Activated naive CD4-positive, alpha-beta T cell treated with anti-CD3 and anti-CD28 coated beads for 36 hours (primary cell): ENCODE measurements at regions of chr12 and their contacts with region 1.

Region 1: GRCh38 chr12:47837190-47838171 is 17.8 kb upstream of the HDAC7 start:
- DNase-seq: peak; percentile 77
- H3K4me3 Mint-ChIP-seq: no peak overlapping the region
- H3K27ac Mint-ChIP-seq: peak overlapping the region; percentile 69
- H3K4me1 Mint-ChIP-seq: peaks cover 61% of the 10 kb centered on the region
- H3K27me3 Mint-ChIP-seq: no peaks in the 10 kb centered on the region

Region 2: DNA sequence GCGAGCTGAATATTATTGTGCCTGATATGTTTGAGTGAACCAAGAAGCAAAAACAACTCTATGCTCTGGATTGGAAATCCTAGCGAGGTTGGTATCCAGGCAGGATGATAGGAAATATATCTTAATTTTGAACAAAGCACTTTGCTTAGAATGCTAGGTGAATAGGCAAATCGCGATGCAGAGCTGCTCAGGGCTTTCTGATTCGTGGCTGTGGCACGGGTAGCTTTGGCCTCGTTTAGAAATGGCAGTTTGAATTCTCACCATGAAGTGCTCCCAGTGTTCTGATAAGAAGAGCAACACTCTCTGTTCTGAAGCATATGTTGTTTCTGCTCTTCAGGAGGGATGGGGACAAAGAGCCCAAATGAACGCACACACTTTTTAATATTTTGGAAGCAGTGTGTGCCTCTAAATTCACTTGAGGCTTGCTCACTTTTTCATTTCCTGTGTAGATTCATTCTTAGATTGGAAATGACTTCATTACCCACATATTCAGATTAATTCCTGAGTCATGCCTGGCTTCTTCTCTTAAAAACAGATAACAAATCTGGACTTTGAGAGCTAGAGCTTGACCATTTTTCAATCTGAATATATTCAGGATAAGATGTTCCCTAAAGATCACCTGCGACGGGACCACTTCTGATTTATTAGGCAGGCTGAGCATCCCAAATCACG is 332.6 kb before region 1 on chr12:
- CTCF ChIA-PET with region 1: no interaction called
- intact Hi-C with region 1: no loop called
- DNase-seq: no peak
- H3K4me3 Mint-ChIP-seq: no peak overlapping the region
- H3K27ac Mint-ChIP-seq: peak overlapping the region; percentile 21
- H3K4me1 Mint-ChIP-seq: peaks cover 20% of the 10 kb centered on the region
- H3K27me3 Mint-ChIP-seq: no peaks in the 10 kb centered on the region

Region 3: DNA sequence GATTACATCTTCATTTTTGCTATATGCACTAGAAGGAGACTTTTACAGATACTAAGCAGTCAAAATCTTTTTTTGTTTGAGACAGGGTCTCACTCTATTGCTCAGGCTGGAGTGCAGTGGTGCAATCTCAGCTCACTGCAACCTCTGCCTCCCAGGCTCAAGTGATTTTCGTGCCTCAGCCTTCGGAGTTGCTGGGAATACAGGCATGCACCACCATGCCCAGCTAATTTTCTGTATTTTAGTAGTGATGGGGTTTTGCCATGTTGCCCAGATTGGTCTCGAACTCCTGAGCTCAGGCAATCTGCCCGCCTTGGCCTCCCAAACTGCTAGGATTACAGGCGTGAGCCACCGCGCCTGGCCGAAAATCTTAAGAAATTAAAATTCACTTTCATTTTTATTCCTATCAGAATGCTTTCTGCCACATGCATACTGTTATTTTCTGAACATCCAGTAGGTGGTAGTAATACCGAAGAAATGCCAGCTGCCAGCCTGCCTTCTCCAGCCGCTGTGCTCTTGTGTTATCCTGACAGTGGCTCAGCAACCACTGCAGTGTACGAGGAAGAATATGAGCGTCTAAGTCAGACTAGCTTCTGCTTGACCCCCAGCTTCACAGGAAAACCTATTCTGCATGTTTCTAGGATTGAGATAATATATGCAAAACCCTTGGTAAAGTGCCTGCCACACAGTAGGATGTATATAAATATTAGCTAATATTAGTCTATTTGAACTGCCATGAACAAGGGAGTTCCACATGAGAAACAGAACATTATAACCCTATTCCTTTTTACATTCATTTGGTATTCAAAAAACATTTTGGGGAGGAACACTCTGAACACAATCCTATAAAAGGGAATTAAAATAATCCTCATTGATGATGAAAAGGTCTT is 185.9 kb before region 1 on chr12:
- CTCF ChIA-PET with region 1: no interaction called
- intact Hi-C with region 1: loop called (anchors 2 kb)
- DNase-seq: peak; percentile 70
- H3K4me3 Mint-ChIP-seq: no peak overlapping the region
- H3K27ac Mint-ChIP-seq: peak overlapping the region; percentile 26
- H3K4me1 Mint-ChIP-seq: peaks cover 18% of the 10 kb centered on the region
- H3K27me3 Mint-ChIP-seq: no peaks in the 10 kb centered on the region

Region 4: GRCh38 chr12:47758834-47759690 is 78.4 kb before region 1 on chr12 and contains the start of gene RAPGEF3:
- CTCF ChIA-PET with region 1: interaction called, 29 read pairs
- intact Hi-C with region 1: no loop called
- DNase-seq: peak; percentile 86
- H3K4me3 Mint-ChIP-seq: peak within 1 kb of the TSS; percentile 65
- H3K27ac Mint-ChIP-seq: no peak within 1 kb of the TSS
- H3K4me1 Mint-ChIP-seq: peaks cover 24% of the 10 kb centered on the region
- H3K27me3 Mint-ChIP-seq: no peaks in the 10 kb centered on the region
- total RNA-seq, gene RAPGEF3: 1.5 to 1.6 TPM

Region 5: DNA sequence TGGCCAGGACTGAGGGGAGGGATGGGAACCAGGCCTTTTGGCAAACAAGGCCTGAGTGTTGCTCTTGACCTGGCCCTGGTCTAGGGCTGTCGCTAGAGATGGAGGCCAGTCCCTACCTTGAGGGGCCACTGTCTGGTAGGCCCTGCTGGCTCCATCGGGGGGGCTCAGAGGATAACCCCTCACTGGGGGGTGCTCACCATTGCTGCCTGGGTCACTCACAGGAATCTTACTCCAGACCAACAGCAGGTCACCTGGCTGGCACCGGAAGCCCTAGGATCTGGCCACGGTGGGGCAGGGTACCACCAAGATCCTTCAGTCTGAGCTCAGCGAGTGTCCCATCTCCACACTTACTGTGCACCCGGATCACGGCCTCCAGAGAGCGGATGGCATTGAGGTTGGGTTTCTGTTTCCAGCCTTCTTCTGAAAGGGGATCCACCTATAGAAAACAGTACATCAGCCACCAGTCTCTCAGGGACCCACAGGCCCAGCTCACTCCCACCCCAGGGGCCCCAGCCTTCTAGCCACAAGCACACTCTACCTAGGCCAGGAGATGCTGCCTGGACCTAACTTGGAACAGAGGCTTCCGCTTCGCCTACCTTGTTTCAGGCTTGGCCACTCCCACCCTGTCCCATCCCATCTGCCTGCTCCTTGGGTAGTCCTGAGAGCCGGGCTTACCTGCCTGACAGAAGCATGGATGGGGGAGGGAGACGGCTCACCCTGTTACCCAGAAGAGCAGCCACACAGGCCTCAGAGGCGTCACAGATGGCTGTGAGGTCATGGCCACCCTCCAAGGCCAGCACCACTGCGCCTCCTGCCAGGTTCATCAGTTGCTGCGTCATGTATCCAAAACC is 52.2 kb before region 1 on chr12:
- CTCF ChIA-PET with region 1: interaction called, 376 read pairs
- intact Hi-C with region 1: no loop called
- DNase-seq: no peak
- H3K4me3 Mint-ChIP-seq: no peak overlapping the region
- H3K27ac Mint-ChIP-seq: peak overlapping the region; percentile 86
- H3K4me1 Mint-ChIP-seq: peaks cover 33% of the 10 kb centered on the region
- H3K27me3 Mint-ChIP-seq: no peaks in the 10 kb centered on the region

Region 6: GRCh38 chr12:47819896-47820630 is 17.4 kb before region 1 on chr12 and contains the start of gene HDAC7:
- CTCF ChIA-PET with region 1: interaction called, 848 read pairs
- intact Hi-C with region 1: loop called (anchors 1 kb)
- DNase-seq: peak; percentile 82
- H3K4me3 Mint-ChIP-seq: peak within 1 kb of the TSS; percentile 95
- H3K27ac Mint-ChIP-seq: peak within 1 kb of the TSS; percentile 99
- H3K4me1 Mint-ChIP-seq: peaks cover 63% of the 10 kb centered on the region
- H3K27me3 Mint-ChIP-seq: no peaks in the 10 kb centered on the region
- total RNA-seq, gene HDAC7: 272 to 289 TPM

Region 7: GRCh38 chr12:48165094-48165981 is 327.9 kb after region 1 on chr12:
- CTCF ChIA-PET with region 1: no interaction called
- intact Hi-C with region 1: loop called (anchors 2 kb)
- DNase-seq: peak; percentile 72
- H3K4me3 Mint-ChIP-seq: no peak overlapping the region
- H3K27ac Mint-ChIP-seq: no peak overlapping the region
- H3K4me1 Mint-ChIP-seq: peaks cover 9% of the 10 kb centered on the region
- H3K27me3 Mint-ChIP-seq: no peaks in the 10 kb centered on the region